Activated CD4-positive, alpha-beta memory T cell treated with anti-CD3 and anti-CD28 coated beads for 36 hours (primary cell): ENCODE measurements at regions of chr4 and their contacts with region 1.

Region 1: GRCh38 chr4:109294006-109294405 is 8.5 kb downstream of the COL25A1 start:
- DNase-seq: peak; percentile 40
- H3K4me3 Mint-ChIP-seq: no peak overlapping the region
- H3K27ac Mint-ChIP-seq: no peak overlapping the region
- H3K4me1 Mint-ChIP-seq: no peaks in the 10 kb centered on the region
- H3K27me3 Mint-ChIP-seq: peaks cover 15% of the 10 kb centered on the region

Region 2: DNA sequence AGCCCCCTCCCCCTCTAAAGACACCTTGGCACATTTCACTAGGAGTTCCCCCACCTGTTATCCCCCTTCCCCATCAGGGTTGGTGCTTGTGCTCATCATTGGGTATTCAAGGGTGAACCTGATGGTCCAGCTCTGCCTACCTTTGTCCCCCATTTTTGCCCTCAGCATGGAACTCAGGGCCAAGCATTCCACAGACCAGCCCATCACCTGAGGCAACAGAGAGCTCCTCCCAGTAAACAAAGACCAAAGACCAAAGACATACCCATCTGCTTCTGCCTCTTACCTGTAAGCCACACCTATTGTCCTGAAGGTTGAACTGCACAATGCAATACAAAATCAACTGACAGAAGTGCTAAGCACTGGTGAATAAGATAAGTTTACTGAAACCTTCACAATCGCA is 1811.5 kb before region 1 on chr4:
- CTCF ChIA-PET with region 1: no interaction called
- POLR2A ChIA-PET with region 1: no interaction called
- intact Hi-C with region 1: no loop called
- DNase-seq: no peak
- H3K4me3 Mint-ChIP-seq: no peak overlapping the region
- H3K27ac Mint-ChIP-seq: no peak overlapping the region
- H3K4me1 Mint-ChIP-seq: no peaks in the 10 kb centered on the region
- H3K27me3 Mint-ChIP-seq: no peaks in the 10 kb centered on the region

Region 3: GRCh38 chr4:108834835-108835384 is 459.1 kb before region 1 on chr4:
- CTCF ChIA-PET with region 1: no interaction called
- POLR2A ChIA-PET with region 1: no interaction called
- intact Hi-C with region 1: loop called (anchors 5 kb)
- DNase-seq: no peak
- H3K4me3 Mint-ChIP-seq: no peak overlapping the region
- H3K27ac Mint-ChIP-seq: no peak overlapping the region
- H3K4me1 Mint-ChIP-seq: no peaks in the 10 kb centered on the region
- H3K27me3 Mint-ChIP-seq: peaks cover 2% of the 10 kb centered on the region

Region 4: DNA sequence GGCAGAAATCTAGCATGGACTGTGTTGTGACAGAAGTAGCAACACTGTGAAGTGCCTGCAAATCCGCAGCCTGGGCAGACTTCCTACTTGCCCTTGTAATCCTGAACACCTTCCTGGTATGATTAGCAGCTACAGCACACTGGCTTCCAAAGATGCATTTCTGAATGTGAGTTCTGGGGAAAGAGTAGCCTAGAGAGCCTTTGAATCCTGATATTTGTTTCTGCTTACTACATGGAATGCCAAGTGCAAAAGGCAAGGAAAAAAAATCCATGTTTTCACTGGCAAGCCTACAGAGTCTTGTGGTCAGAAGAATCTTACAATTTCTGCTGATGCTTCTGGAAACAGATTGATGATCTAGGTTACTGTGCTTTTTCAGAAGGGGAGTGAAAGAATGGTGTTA is 215.3 kb before region 1 on chr4:
- CTCF ChIA-PET with region 1: no interaction called
- POLR2A ChIA-PET with region 1: no interaction called
- intact Hi-C with region 1: loop called (anchors 5 kb)
- DNase-seq: no peak
- H3K4me3 Mint-ChIP-seq: no peak overlapping the region
- H3K27ac Mint-ChIP-seq: no peak overlapping the region
- H3K4me1 Mint-ChIP-seq: peaks cover 10% of the 10 kb centered on the region
- H3K27me3 Mint-ChIP-seq: no peaks in the 10 kb centered on the region

Region 5: GRCh38 chr4:109229028-109229427 is 65.0 kb before region 1 on chr4:
- CTCF ChIA-PET with region 1: no interaction called
- POLR2A ChIA-PET with region 1: no interaction called
- intact Hi-C with region 1: no loop called
- DNase-seq: no peak
- H3K4me3 Mint-ChIP-seq: no peak overlapping the region
- H3K27ac Mint-ChIP-seq: no peak overlapping the region
- H3K4me1 Mint-ChIP-seq: no peaks in the 10 kb centered on the region
- H3K27me3 Mint-ChIP-seq: no peaks in the 10 kb centered on the region

Region 6: DNA sequence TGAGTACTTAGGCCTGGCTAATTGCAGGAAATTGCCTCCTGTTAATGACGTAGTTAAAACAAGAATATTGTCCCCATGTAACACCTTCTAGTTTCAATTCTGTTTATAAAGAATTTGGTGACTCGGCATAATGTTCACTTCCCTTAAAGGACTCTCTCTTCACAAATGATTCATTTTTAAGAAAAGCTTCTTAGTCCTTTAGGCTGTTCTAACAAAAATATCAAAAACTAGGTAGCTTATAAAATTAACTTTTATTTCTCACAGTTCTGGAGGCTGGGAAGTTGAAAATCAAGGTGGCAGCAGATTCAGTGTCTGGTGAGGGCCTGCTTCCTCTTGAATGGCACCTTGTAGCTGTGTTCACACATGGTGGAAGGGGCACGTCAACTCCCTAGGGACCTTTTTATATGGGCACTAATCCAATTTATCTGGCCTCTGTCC is 15.4 kb before region 1 on chr4:
- CTCF ChIA-PET with region 1: interaction called, 10 read pairs
- POLR2A ChIA-PET with region 1: no interaction called
- intact Hi-C with region 1: no loop called
- DNase-seq: no peak
- H3K4me3 Mint-ChIP-seq: no peak overlapping the region
- H3K27ac Mint-ChIP-seq: no peak overlapping the region
- H3K4me1 Mint-ChIP-seq: peaks cover 13% of the 10 kb centered on the region
- H3K27me3 Mint-ChIP-seq: peaks cover 14% of the 10 kb centered on the region

Region 7: GRCh38 chr4:109319156-109319555 is 25.1 kb after region 1 on chr4:
- CTCF ChIA-PET with region 1: no interaction called
- POLR2A ChIA-PET with region 1: no interaction called
- intact Hi-C with region 1: no loop called
- DNase-seq: no peak
- H3K4me3 Mint-ChIP-seq: no peak overlapping the region
- H3K27ac Mint-ChIP-seq: no peak overlapping the region
- H3K4me1 Mint-ChIP-seq: no peaks in the 10 kb centered on the region
- H3K27me3 Mint-ChIP-seq: peaks cover 5% of the 10 kb centered on the region